ENCODE measurements at regions of chr18 and their contacts with region 1.

Region 1: GRCh38 chr18:70454704-70455322 is 166.0 kb downstream of the SOCS6 start:
- DNase-seq: peak; percentile 40
- H3K4me3 ChIP-seq: no peak overlapping the region
- H3K27ac ChIP-seq: no peak overlapping the region
- H3K4me1 ChIP-seq: no peaks in the 10 kb centered on the region
- H3K27me3 ChIP-seq: peaks cover 2% of the 10 kb centered on the region
- CTCF ChIP-seq: peak; percentile 79 to 89

Region 2: DNA sequence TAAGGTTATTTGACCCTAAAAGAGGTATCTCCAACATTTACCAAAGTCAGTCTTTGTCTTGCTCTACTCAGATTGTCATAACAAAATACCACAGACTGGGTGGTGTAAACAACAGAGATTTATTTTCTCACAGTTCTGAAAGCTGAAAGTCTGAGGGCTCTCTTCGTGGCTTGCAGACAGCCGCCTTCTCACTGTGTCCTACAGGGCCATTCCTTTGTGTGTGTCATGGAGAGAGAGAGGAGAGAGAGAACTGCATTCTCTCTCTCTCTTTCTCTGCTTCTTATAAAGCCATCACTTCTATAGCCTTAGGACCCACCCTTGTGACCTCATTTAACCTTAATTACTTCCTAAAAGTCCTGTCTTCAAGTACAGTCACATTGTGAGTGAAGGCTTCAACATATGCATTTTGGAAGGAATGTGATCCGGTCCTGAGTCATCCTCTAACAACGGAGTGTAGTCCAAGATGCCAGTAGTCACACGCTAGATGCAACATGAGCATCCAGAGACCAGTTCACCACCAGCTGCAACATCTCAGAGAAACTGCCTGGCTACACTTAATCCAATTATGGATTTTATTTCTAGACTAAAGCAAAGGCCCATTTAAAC is 637.4 kb before region 1 on chr18:
- CTCF ChIA-PET with region 1: no interaction called
- dilution Hi-C with region 1: no loop called
- in situ Hi-C with region 1: loop called in 1 of 2 experiments (anchors 25 kb)
- intact Hi-C with region 1: no loop called
- DNase-seq: peak; percentile 67
- H3K4me3 ChIP-seq: no peak overlapping the region
- H3K27ac ChIP-seq: no peak overlapping the region
- H3K4me1 ChIP-seq: peaks cover 8% of the 10 kb centered on the region
- H3K27me3 ChIP-seq: no peaks in the 10 kb centered on the region
- CTCF ChIP-seq: no peak

Region 3: DNA sequence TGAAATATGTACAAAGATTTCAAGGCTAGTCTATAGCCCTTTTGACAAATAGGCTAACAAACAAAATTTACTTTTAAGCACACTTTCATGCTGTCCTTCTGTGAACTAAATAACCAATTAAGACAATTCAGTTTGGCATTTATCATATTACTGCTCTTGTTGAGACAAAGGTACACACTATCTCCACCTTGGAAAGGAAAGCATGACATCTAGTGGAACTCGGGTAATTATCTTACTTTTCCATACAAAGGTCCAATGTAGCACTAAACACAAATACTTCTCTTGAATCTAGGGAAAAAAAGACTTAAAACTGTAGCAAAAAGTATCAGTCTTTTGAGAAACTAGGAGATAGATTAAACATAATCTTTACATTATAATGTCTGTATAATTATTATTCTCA is 382.1 kb before region 1 on chr18:
- CTCF ChIA-PET with region 1: interaction called, 35 read pairs
- dilution Hi-C with region 1: no loop called
- in situ Hi-C with region 1: no loop called
- intact Hi-C with region 1: no loop called
- DNase-seq: peak; percentile 4
- H3K4me3 ChIP-seq: no peak overlapping the region
- H3K27ac ChIP-seq: no peak overlapping the region
- H3K4me1 ChIP-seq: no peaks in the 10 kb centered on the region
- H3K27me3 ChIP-seq: no peaks in the 10 kb centered on the region
- CTCF ChIP-seq: peak; percentile 25 to 49

Region 4: DNA sequence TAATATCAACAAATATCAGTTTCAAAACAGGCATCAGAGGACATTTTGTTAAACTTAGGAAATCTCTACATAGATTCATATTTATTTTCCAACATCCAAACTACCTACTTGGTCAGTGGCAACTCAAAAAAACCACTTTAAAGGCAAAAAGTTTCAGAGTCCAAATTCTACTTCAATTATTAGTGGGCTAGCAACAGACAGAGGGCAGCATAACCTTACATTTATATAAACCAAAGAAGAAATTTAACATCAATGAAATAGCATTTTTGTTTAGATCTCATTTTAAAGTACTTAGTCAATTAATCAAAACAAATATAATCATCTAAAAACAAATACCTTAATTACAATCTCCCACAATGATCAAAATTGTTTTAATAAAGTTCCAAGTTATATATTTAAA is 282.6 kb before region 1 on chr18:
- CTCF ChIA-PET with region 1: interaction called, 5 read pairs
- dilution Hi-C with region 1: no loop called
- in situ Hi-C with region 1: no loop called
- intact Hi-C with region 1: loop called (anchors 1 kb)
- DNase-seq: no peak
- H3K4me3 ChIP-seq: no peak overlapping the region
- H3K27ac ChIP-seq: no peak overlapping the region
- H3K4me1 ChIP-seq: no peaks in the 10 kb centered on the region
- H3K27me3 ChIP-seq: no peaks in the 10 kb centered on the region
- CTCF ChIP-seq: peak; percentile 15 to 40

Region 5: GRCh38 chr18:70188113-70188512 is 266.7 kb before region 1 on chr18:
- CTCF ChIA-PET with region 1: no interaction called
- dilution Hi-C with region 1: no loop called
- in situ Hi-C with region 1: no loop called
- intact Hi-C with region 1: no loop called
- DNase-seq: no peak
- H3K4me3 ChIP-seq: no peak overlapping the region
- H3K27ac ChIP-seq: no peak overlapping the region
- H3K4me1 ChIP-seq: no peaks in the 10 kb centered on the region
- H3K27me3 ChIP-seq: no peaks in the 10 kb centered on the region
- CTCF ChIP-seq: no peak

Region 6: GRCh38 chr18:70421471-70422390 is 33.1 kb before region 1 on chr18:
- CTCF ChIA-PET with region 1: interaction called, 14 read pairs
- dilution Hi-C with region 1: no loop called
- in situ Hi-C with region 1: no loop called
- intact Hi-C with region 1: no loop called
- DNase-seq: peak; percentile 96
- H3K4me3 ChIP-seq: no peak overlapping the region
- H3K27ac ChIP-seq: peak overlapping the region; percentile 95
- H3K4me1 ChIP-seq: peaks cover 45% of the 10 kb centered on the region
- H3K27me3 ChIP-seq: no peaks in the 10 kb centered on the region
- CTCF ChIP-seq: no peak

Measured in mammary epithelial cell (primary cell).